K562 (cell line): ENCODE measurements at regions of chr19 and their contacts with region 1.

Region 1: DNA sequence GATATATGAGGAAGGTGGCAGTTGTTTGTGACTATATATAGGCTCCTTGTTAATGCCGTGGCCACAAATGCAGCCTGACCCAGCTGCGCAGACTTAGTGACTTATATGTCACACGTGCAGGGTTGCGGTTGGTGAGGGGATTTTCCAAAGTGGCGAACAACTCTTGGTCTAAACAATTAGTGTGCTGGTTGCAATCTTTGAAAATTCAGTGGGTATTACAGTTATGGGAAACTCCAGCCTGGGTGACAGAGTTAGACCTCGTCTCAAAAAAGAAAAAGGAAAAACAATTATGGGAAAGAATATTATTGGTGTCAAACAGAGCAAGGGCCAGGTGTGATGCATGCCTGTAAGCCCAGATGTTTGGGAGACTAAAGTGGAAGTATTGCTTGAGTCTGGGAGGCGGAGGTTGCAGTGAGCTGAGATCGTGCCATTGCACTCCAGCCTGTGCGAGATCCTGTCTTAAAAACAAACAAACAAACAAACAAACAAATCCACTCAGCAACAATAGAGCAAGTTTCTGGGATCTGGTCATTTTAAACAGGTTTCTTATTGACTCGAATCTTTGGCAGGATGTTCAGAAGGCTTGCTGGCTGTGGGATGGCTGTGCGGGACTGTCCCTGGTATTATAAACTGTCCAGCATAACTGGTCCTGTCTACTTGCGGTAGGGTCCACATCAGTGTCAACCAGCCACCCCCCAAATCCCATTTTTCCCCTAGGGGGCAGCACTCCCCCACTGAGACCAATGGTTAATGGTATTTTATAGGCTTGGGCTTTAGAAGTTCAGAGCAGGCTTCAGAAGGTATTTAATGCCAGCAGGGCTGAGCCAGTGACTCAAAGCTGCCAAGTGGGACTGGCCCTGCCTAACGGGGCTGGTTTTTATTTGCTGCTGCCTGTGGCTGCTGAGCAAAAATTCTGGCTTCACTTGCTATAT is 15.4 kb downstream of the RELB start:
- DNase-seq: peak; percentile 71 to 86 (median 78)
- ATAC-seq: peak; percentile 98
- H3K4me3 ChIP-seq: no peak overlapping the region
- H3K27ac ChIP-seq: no peak overlapping the region
- H3K4me1 ChIP-seq: peaks cover 0 to 1% of the 10 kb centered on the region in 2 experiments; a peak in 2 of 5 replicates
- H3K27me3 ChIP-seq: no peaks in the 10 kb centered on the region
- CTCF ChIP-seq: peak; percentile 85 to 89 (median 87)
- EP300 ChIP-seq: no peak
- POLR2A ChIP-seq: no peak
- RAD21 ChIP-seq: peak; percentile 65 to 85

Region 2: DNA sequence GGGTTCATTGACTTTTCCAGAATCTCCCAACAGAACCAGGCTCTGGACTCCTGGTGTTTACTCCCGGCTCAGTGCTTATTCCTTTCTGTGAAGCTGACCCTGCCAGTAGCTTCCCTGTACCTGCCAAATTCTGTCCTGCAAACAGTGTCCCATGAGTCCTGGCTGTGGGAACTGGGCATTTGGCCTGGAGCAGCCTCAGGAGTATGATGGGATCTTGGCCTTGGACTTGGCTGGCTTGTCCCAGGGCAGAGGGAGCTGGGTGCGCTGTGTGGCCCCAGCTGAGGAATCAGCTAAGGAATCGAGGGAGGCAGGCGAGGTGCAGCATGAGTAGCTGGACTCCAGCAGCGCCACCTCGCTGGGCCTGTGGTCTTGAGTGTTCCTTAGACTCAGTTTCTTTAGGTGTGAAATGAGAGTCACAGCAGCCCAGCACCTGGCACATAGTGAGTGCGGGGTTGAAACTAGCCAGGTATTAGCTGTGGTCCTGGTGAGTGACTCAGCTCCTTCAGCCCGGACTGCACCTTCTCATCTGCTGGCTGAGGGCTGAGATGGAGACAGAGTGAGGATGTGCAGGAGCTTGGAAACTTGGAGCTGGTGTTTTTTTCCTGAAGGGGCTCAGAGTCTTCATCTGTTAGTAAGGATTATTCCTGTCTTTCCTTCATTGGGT is 32.6 kb after region 1 on chr19:
- CTCF ChIA-PET with region 1: no interaction called
- POLR2A ChIA-PET with region 1: no interaction called
- in situ Hi-C with region 1: no loop called
- intact Hi-C with region 1: no loop called
- DNase-seq: no peak
- ATAC-seq: peak; percentile 60
- H3K4me3 ChIP-seq: no peak overlapping the region
- H3K27ac ChIP-seq: no peak overlapping the region; the same call in 2 of the 3 replicates
- H3K4me1 ChIP-seq: peaks cover 3 to 8% of the 10 kb centered on the region in 2 experiments; a peak in 3 of 5 replicates
- H3K27me3 ChIP-seq: no peaks in the 10 kb centered on the region
- CTCF ChIP-seq: no peak
- EP300 ChIP-seq: no peak
- POLR2A ChIP-seq: no peak
- RAD21 ChIP-seq: no peak

Region 3: DNA sequence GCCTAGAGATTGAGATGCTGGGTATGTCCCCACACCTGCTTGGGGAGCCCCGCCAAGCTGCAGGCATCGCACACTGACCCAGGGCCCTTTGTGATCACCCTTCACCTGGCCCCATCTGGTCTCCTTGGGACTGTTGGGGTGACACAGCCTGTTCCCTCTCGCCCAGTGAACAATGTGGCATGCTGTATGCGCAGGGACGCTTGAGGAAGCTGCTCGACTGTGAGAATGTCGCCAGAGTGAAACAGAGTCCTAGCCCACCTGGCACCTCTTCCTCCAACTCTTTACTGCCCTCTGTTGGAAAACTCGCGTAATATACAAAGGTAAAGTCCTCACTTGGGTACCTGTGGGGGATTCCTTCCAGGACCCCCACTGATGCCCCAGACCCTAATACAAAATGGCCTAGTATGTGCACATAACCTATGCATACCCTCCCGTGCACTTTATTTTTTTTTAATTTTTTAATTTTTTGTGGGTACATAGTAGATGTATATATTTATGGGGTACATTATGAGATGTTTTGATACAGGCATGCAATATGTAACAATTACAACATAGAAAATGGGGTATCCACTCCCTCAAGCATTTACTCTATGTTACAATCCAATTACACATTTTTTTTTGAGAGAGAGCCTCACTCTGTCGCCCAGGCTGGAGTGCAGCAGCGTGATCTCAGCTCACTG is 170.9 kb after region 1 on chr19:
- CTCF ChIA-PET with region 1: no interaction called
- POLR2A ChIA-PET with region 1: no interaction called
- in situ Hi-C with region 1: no loop called
- intact Hi-C with region 1: loop called (anchors 5 kb)
- DNase-seq: peak; percentile 59 to 66 (median 64)
- ATAC-seq: peak; percentile 75
- H3K4me3 ChIP-seq: no peak overlapping the region
- H3K27ac ChIP-seq: no peak overlapping the region
- H3K4me1 ChIP-seq: peaks cover 2 to 9% of the 10 kb centered on the region in 2 experiments; a peak in 4 of 5 replicates
- H3K27me3 ChIP-seq: no peaks in the 10 kb centered on the region
- CTCF ChIP-seq: peak; percentile 68 to 74 (median 70)
- EP300 ChIP-seq: no peak
- POLR2A ChIP-seq: no peak
- RAD21 ChIP-seq: peak in 1 of 2 experiments; percentile 72; a peak in 3 of 4 replicates

Region 4: GRCh38 chr19:45245334-45245787 is 228.7 kb after region 1 on chr19 and contains the start of gene EXOC3L2:
- CTCF ChIA-PET with region 1: no interaction called
- POLR2A ChIA-PET with region 1: no interaction called
- in situ Hi-C with region 1: no loop called
- intact Hi-C with region 1: loop called (anchors 10 kb)
- DNase-seq: peak; percentile 70 to 92 (median 80)
- ATAC-seq: peak; percentile 80
- H3K4me3 ChIP-seq: peak within 1 kb of the TSS; percentile 29
- H3K27ac ChIP-seq: peak within 1 kb of the TSS; percentile 42
- H3K4me1 ChIP-seq: peaks cover 42 to 63% of the 10 kb centered on the region in 2 experiments
- H3K27me3 ChIP-seq: no peaks in the 10 kb centered on the region
- CTCF ChIP-seq: no peak
- EP300 ChIP-seq: no peak
- POLR2A ChIP-seq: 0 out of 2 replicates have a peak, but pooled peaks have one; percentile 49
- RAD21 ChIP-seq: no peak
- polyA plus RNA-seq, gene EXOC3L2: 0.31 to 0.34 TPM

Region 5: DNA sequence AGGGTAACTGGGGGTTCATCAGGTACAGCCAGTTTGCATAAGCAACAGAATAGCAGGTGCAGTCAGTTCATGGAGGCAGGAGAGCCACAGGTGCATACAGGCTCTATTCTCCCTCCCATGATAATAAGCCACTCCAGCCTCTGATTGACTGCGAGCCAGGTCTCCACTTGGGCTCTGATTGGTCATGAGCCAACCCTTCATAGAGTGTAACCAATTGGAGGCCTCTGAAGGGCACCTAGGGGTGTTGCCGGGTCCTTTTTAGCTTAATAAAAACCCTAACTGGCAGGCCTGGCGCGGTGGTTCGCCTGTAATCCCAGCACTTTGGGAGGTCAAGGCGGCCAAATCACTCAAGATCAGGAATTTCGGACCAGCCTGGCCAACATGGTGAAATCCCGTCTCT is 314.8 kb after region 1 on chr19:
- CTCF ChIA-PET with region 1: no interaction called
- POLR2A ChIA-PET with region 1: no interaction called
- in situ Hi-C with region 1: no loop called
- intact Hi-C with region 1: loop called (anchors 10 kb)
- DNase-seq: no peak
- ATAC-seq: no peak
- H3K4me3 ChIP-seq: no peak overlapping the region
- H3K27ac ChIP-seq: no peak overlapping the region
- H3K4me1 ChIP-seq: peaks cover under 1 to 4% of the 10 kb centered on the region in 2 experiments; a peak in 2 of 5 replicates
- H3K27me3 ChIP-seq: no peaks in the 10 kb centered on the region
- CTCF ChIP-seq: no peak
- EP300 ChIP-seq: no peak
- POLR2A ChIP-seq: no peak
- RAD21 ChIP-seq: no peak